Dorsolateral prefrontal cortex (tissue), 120 donors: ENCODE measurements at regions of chr10 and their contacts with region 1.

Region 1: GRCh38 chr10:97318772-97319651 is at the start of gene FRAT1:
- DNase-seq: peak; percentile 81 to 91 (median 88)
- H3K4me3 ChIP-seq: peak within 1 kb of the TSS; percentile 66 to 92 (median 77)
- H3K27ac ChIP-seq: peak within 1 kb of the TSS; percentile 78 to 100 (median 98)
- H3K27me3 ChIP-seq: no peaks in the 10 kb centered on the region
- CTCF ChIP-seq: peak in 9 of 56 donors; percentile 7 to 28 (median 16)
- total RNA-seq, gene FRAT1: 3.9 to 10.3 (median 6.2) TPM

Region 2: GRCh38 chr10:97278491-97278989 is 40.5 kb before region 1 on chr10:
- intact Hi-C with region 1: loop called in 1 of 2 experiments (anchors 2 kb)
- DNase-seq: no peak
- H3K4me3 ChIP-seq: no peak overlapping the region
- H3K27ac ChIP-seq: peak overlapping the region in 29 of 59 donors; percentile 1 to 63 (median 30)
- H3K27me3 ChIP-seq: no peaks in the 10 kb centered on the region
- CTCF ChIP-seq: peak; percentile 49 to 86 (median 75)

Region 3: DNA sequence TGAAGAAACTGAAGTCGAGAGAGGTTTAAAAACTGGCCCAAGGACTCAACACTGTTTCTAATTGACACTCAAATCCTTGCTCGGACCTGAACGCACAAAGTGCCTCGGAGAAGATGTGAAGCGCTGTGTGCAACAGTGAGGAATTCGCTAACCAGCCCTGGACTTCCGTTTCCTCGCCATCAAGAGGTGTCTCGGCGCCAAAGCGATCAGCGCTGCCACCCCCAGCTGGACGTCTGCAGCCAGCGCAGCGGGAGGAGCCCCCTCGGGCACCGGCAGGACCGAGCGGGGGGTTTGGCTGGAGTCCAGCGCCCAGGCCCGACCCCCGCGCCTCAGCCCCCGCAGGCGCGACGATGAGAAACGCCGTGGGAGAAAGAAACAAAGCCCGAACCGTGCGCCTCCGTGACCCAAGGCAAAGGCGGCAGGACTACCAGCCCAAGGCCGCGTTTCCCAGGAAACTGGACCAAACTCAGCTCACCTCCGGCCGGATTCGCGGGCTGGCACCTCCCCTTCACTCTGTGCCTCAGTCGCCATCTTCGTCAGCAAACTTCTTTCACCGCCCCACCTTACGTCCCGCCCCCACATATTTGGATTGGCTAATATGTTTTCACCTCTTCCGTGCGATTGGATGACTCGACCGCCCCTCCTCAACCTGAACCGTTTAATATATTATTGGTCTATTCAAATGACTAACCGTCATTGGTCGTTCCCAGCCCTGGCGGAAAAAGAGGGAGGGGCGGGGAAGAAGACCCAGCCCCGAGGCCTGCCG is 26.7 kb before region 1 on chr10 and contains the start of gene ARHGAP19:
- intact Hi-C with region 1: loop called in 1 of 2 experiments (anchors 1 kb)
- DNase-seq: peak; percentile 84 to 98 (median 95)
- H3K4me3 ChIP-seq: peak within 1 kb of the TSS; percentile 75 to 100 (median 95)
- H3K27ac ChIP-seq: peak within 1 kb of the TSS; percentile 76 to 99 (median 93)
- H3K27me3 ChIP-seq: no peaks in the 10 kb centered on the region
- CTCF ChIP-seq: peak in 16 of 56 donors; percentile 6 to 27 (median 12)
- total RNA-seq, gene ARHGAP19: 3.1 to 20.2 (median 8.4) TPM

Region 4: DNA sequence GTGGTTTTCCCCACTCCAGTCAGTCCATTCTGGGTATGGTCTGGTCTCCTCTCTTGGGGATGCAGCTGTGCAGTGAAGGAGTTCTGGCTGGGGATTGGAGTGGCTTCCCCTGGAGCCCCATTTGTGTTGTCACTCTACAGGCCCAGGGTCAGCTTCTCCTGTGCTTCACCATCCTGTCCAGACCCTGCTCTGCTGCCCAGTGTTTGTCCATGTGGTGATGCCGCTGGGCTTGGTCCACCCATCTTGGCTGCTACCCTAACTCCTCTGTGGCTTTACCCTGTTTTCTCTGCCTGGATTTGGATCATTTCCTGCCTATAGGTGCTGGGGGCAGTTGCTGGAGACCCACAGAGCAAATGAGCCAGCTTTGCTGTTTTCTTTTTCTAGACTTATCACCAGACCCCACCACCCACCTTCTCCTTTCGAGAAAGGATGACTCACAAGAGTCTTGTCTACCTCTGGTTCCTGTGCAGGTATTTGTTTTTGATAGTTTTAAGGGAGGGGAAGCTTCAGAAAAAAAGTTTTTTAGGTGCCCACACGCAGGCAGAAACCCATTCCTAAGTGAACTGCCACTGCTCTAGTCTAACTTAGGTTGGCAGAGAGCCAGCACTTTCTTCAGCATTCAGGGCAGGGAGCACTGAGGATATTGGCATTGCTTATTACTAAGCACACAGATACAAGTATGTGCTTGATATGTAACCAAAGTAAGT is 135.5 kb after region 1 on chr10:
- intact Hi-C with region 1: no loop called
- DNase-seq: no peak
- H3K4me3 ChIP-seq: no peak overlapping the region
- H3K27ac ChIP-seq: peak overlapping the region in 18 of 59 donors; percentile 5 to 47 (median 22)
- H3K27me3 ChIP-seq: no peaks in the 10 kb centered on the region
- CTCF ChIP-seq: no peak